Posterior vena cava (tissue), 2 donors: ENCODE measurements at regions of chr18 and their contacts with region 1.

Region 1: DNA sequence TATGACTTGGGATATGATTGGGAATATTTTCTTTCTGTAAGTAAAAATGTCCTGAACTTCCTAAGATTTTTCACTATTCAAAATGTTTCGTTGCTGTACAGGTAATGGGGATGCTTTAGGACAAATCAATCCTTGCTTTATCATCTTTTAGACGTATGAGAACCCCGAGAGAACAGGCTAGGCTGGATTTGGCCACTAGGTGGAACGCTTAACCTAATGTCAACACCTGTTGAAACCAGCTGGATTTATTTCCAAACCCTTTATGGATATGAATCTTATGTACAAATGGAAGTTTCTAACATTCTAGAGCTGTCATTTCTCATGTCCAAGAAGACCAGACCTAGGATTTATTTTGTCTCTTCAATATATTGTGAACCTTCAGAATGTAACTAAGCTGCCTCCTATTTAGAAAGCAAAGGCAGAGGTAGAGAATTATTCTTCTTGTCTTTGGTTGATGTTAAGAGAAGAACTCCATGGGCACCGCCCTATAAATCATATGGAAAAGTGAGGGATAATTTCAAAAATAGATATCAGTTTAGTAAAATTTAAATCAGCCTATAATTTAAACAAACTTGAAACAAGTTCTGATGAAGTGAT is 96.7 kb downstream of the PMAIP1 start:
- DNase-seq: no peak

Region 2: DNA sequence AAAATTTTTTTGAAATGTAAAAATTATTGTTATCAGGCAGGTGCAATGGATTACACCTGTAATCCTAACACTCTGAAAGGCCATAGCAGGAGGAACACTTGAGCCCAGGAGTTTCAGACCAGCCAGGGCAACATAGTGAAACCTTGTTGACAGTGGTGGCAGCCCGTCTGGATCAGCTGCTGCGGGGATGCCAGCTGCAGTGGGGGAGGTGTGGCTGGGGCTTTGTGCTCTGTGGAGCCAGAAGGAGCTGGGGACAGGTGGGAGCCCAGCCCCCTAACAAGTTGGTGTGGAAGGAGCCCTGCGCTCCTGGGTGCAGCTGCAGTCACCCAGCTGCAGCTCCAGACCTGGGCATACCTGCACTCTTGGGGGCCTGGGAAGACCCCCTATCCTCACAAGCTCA is 558.5 kb after region 1 on chr18:
- intact Hi-C with region 1: loop called in 1 of 2 experiments (anchors 5 kb)
- DNase-seq: no peak